ENCODE measurements at regions of chr12 and their contacts with region 1.

Region 1: DNA sequence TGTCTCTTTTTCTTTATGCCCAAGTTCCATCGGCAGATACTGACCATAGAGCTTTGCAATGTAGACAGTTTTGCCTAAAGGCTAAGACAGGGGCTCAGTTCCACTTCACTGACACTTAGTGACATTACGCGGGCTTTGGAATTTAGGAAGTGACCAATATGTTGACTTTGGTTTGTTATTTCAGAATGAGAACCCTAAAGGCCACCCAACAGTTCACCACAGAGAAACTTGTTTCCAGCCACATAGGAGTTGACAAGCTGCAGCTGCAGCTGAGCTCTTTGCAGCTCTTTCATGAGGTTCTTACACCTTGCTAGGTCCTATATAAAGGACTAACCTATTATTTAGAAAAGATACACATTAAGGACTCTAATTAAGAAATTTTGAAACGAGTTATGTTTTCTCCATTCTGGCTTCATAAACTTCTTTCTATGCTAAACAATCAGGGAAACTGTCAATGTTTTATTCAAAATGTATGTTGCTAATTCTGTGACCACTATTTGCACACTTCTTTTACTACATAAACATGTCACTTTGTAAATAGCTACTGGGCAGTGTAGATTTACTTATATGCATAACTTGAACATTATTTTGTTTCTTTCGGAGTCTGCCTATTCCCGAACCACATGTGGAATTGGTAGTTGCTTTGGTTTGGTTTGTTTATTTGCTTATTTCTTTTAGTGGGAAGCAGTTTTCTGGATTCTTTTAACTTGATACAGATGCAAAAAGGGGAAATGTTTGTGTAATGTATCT is 18.5 kb upstream of the KLRD1 start:
- DNase-seq: no peak
- ATAC-seq: no peak
- H3K4me3 ChIP-seq: no peak overlapping the region
- H3K27ac ChIP-seq: peak overlapping the region in 1 of 10 donors; percentile 6
- H3K4me1 ChIP-seq: no peaks in the 10 kb centered on the region
- H3K27me3 ChIP-seq: no peaks in the 10 kb centered on the region
- CTCF ChIP-seq: no peak

Region 2: DNA sequence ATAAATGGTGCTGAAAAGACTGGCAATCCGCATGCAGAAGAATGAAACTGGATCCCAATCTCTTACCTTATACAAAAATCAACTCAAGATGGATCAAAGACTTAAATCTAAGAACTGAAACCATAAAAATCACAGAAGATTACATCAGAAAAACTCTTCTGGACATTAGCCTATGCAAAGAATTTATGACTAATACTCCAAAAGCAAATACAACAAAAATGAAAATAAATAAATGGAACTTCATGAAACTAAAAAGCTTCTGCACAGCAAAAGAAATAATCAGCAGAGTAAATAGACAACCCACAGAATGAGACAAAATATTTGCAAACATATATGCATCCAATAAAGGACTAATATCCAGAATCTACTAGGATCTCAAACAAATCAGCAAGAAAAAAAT is 176.1 kb before region 1 on chr12:
- intact Hi-C with region 1: no loop called
- DNase-seq: no peak
- ATAC-seq: no peak
- H3K4me3 ChIP-seq: no peak overlapping the region
- H3K27ac ChIP-seq: no peak overlapping the region
- H3K4me1 ChIP-seq: no peaks in the 10 kb centered on the region
- H3K27me3 ChIP-seq: no peaks in the 10 kb centered on the region
- CTCF ChIP-seq: no peak

Region 3: GRCh38 chr12:10310926-10311720 is 21.9 kb after region 1 on chr12:
- intact Hi-C with region 1: loop called in 1 of 10 experiments (anchors 1 kb)
- DNase-seq: peak in 1 of 2 donors; percentile 6
- ATAC-seq: peak in 4 of 8 donors; percentile 29 to 52 (median 44)
- H3K4me3 ChIP-seq: peak overlapping the region in 1 of 10 donors; percentile 20
- H3K27ac ChIP-seq: peak overlapping the region in 1 of 10 donors; percentile 4
- H3K4me1 ChIP-seq: peaks cover 0 to 8% (median 0%) of the 10 kb centered on the region in 9 donors
- H3K27me3 ChIP-seq: no peaks in the 10 kb centered on the region
- CTCF ChIP-seq: no peak

Measured in heart right ventricle (tissue), 16 donors.